CD8-positive, alpha-beta T cell (primary cell): ENCODE measurements at regions of chr7 and their contacts with region 1.

Region 1: GRCh38 chr7:87797798-87798403 is 78.3 kb downstream of the SLC25A40 start:
- DNase-seq: peak in 2 of 9 experiments; percentile 56 to 68
- ATAC-seq: peak; percentile 80
- H3K4me3 ChIP-seq: no peak overlapping the region
- H3K4me3 Mint-ChIP-seq: no peak overlapping the region
- H3K27ac ChIP-seq: no peak overlapping the region
- H3K27ac Mint-ChIP-seq: no peak overlapping the region
- H3K4me1 ChIP-seq: no peaks in the 10 kb centered on the region
- H3K4me1 Mint-ChIP-seq: no peaks in the 10 kb centered on the region
- H3K27me3 ChIP-seq: no peaks in the 10 kb centered on the region
- H3K27me3 Mint-ChIP-seq: peaks cover 6% of the 10 kb centered on the region
- CTCF ChIP-seq: peak; percentile 55

Region 2: GRCh38 chr7:87875151-87876039 is 77.5 kb after region 1 on chr7:
- CTCF ChIA-PET with region 1: no interaction called
- POLR2A ChIA-PET with region 1: no interaction called
- intact Hi-C with region 1: no loop called
- DNase-seq: peak in 4 of 9 experiments; percentile 4 to 43 (median 18)
- ATAC-seq: no peak
- H3K4me3 ChIP-seq: peak overlapping the region; percentile 85 to 91
- H3K4me3 Mint-ChIP-seq: peak overlapping the region; percentile 94
- H3K27ac ChIP-seq: peak overlapping the region; percentile 41 to 93
- H3K27ac Mint-ChIP-seq: peak overlapping the region; percentile 85
- H3K4me1 ChIP-seq: peaks cover 31% of the 10 kb centered on the region
- H3K4me1 Mint-ChIP-seq: peaks cover 54% of the 10 kb centered on the region
- H3K27me3 ChIP-seq: no peaks in the 10 kb centered on the region
- H3K27me3 Mint-ChIP-seq: no peaks in the 10 kb centered on the region
- CTCF ChIP-seq: no peak

Region 3: GRCh38 chr7:88169717-88170320 is 371.9 kb after region 1 on chr7:
- CTCF ChIA-PET with region 1: interaction called, 7 read pairs
- POLR2A ChIA-PET with region 1: no interaction called
- intact Hi-C with region 1: loop called (anchors 1 to 2 kb)
- DNase-seq: peak in 2 of 9 experiments; percentile 3 to 19
- ATAC-seq: no peak
- H3K4me3 ChIP-seq: no peak overlapping the region
- H3K4me3 Mint-ChIP-seq: no peak overlapping the region
- H3K27ac ChIP-seq: no peak overlapping the region
- H3K27ac Mint-ChIP-seq: no peak overlapping the region
- H3K4me1 ChIP-seq: no peaks in the 10 kb centered on the region
- H3K4me1 Mint-ChIP-seq: no peaks in the 10 kb centered on the region
- H3K27me3 ChIP-seq: no peaks in the 10 kb centered on the region
- H3K27me3 Mint-ChIP-seq: no peaks in the 10 kb centered on the region
- CTCF ChIP-seq: peak; percentile 57